Transverse colon (tissue), 4 donors: ENCODE measurements at regions of chr9 and their contacts with region 1.

Region 1: DNA sequence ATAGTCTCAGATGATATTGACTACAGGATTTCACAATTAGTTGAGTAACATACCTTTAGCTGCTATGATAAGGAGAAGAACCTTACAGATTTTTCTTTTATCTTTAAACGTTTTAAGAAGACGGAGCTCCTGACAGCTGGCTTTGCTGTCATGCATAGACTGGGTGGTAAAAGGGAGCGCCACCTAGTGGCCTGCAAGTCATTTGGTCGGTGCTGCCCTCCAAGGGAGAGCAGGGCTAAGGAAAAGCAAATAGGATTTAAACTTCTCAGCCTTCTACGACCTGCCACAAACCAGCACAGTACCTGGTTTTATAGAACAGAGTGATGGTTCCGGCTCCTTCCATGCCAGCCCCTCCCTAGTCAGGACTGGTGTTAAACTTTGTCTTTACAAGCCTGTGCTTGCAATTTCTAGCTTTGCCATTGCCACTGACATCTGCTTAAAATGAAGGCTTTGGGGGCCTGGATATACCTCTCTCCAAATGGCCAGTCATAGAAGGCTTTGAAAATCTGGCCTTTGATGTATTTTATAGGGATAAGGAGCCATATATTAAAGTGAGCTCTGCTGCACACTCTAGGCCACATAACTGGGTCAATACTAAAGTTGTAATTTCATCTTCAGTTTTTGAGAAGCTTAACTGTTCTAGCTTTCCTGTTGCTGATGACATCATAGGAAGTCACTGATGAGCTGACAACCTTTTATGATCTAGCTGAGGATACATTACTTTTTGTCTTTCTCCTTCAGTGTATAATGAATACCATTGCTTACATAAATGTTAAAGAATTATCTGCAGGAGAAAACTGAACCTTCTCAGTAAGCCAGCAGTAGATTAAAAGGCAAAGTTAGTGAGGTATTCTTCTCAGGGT is 31.1 kb upstream of the ADAMTSL1 start:
- DNase-seq: peak; percentile 76
- H3K4me3 ChIP-seq: no peak overlapping the region
- H3K27ac ChIP-seq: no peak overlapping the region
- H3K4me1 ChIP-seq: peaks cover 0 to 16% (median 2%) of the 10 kb centered on the region in 4 donors
- H3K27me3 ChIP-seq: no peaks in the 10 kb centered on the region
- CTCF ChIP-seq: peak; percentile 66 to 84 (median 79)
- EP300 ChIP-seq: no peak
- POLR2A ChIP-seq: no peak

Region 2: DNA sequence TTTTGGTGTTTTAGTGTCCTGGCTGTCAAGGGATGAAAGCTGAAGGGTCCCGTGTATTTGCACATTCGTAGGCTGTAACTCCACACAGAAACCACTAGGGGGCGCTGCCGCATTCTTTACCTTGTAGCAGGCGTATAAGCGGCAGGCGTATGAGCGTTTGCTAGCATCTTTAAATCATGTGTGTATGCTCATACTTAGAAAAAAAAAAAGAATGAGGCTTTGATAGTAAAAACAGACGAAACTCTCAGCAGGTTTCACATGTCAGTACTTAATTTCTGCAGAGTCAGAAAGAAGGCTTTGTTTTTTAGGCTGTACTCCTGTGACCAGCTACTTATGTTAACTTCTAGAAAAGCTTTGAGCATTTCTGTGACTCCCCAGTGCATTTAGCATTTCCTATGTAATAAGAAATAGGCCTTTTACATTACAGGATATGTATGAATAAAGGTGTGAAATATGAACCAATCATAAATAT is 187.7 kb before region 1 on chr9:
- in situ Hi-C with region 1: loop called (anchors 10 to 25 kb)
- intact Hi-C with region 1: loop called (anchors 5 kb)
- DNase-seq: peak; percentile 78
- H3K4me3 ChIP-seq: no peak overlapping the region
- H3K27ac ChIP-seq: no peak overlapping the region
- H3K4me1 ChIP-seq: peaks cover 0 to 12% (median 0%) of the 10 kb centered on the region in 4 donors
- H3K27me3 ChIP-seq: no peaks in the 10 kb centered on the region
- CTCF ChIP-seq: peak; percentile 87 to 95 (median 94)
- EP300 ChIP-seq: no peak
- POLR2A ChIP-seq: no peak

Region 3: GRCh38 chr9:18473652-18474279 is 30.9 kb after region 1 on chr9 and contains the start of gene ADAMTSL1:
- in situ Hi-C with region 1: no loop called
- intact Hi-C with region 1: no loop called
- DNase-seq: peak; percentile 25
- H3K4me3 ChIP-seq: peak within 1 kb of the TSS in 3 of 4 donors; percentile 17 to 26 (median 24)
- H3K27ac ChIP-seq: peak within 1 kb of the TSS; percentile 1 to 59 (median 50)
- H3K4me1 ChIP-seq: peaks cover 0 to 23% (median 14%) of the 10 kb centered on the region in 4 donors
- H3K27me3 ChIP-seq: no peaks in the 10 kb centered on the region
- CTCF ChIP-seq: no peak
- EP300 ChIP-seq: no peak
- POLR2A ChIP-seq: no peak
- total RNA-seq, gene ADAMTSL1: 13.3 to 39.7 (median 27.2) TPM

Region 4: GRCh38 chr9:19022206-19022605 is 579.3 kb after region 1 on chr9:
- in situ Hi-C with region 1: loop called in 2 of 4 experiments (anchors 25 kb)
- intact Hi-C with region 1: no loop called
- DNase-seq: no peak
- H3K4me3 ChIP-seq: no peak overlapping the region
- H3K27ac ChIP-seq: no peak overlapping the region
- H3K4me1 ChIP-seq: no peaks in the 10 kb centered on the region
- H3K27me3 ChIP-seq: no peaks in the 10 kb centered on the region
- CTCF ChIP-seq: no peak
- EP300 ChIP-seq: no peak
- POLR2A ChIP-seq: no peak

Region 5: GRCh38 chr9:19048966-19049916 is 606.4 kb after region 1 on chr9 and contains the start of gene RRAGA:
- in situ Hi-C with region 1: loop called in 1 of 4 experiments (anchors 25 kb)
- intact Hi-C with region 1: no loop called
- DNase-seq: peak; percentile 96
- H3K4me3 ChIP-seq: peak within 1 kb of the TSS; percentile 77 to 81 (median 80)
- H3K27ac ChIP-seq: peak within 1 kb of the TSS; percentile 94 to 98 (median 97)
- H3K4me1 ChIP-seq: peaks cover 20 to 40% (median 27%) of the 10 kb centered on the region in 4 donors
- H3K27me3 ChIP-seq: no peaks in the 10 kb centered on the region
- CTCF ChIP-seq: peak; percentile 78 to 97 (median 90)
- EP300 ChIP-seq: no peak
- POLR2A ChIP-seq: peak; percentile 91
- total RNA-seq, gene RRAGA: 35.0 to 47.0 (median 39.6) TPM